Activated T-helper 1 cell treated with anti-CD3 and anti-CD28 coated beads, Interleukin-12 subunit alpha, Interleukin-12 subunit beta, Interleukin-2, Interleukin-4 antibody, amounts not matched to agents 30 ng/mL and 10 ng/mL and 1 ng/mL, durations not matched to agents 14 hours and 24 hours and 36 hours (primary cell): ENCODE measurements at regions of chr4 and their contacts with region 1.

Region 1: GRCh38 chr4:986879-987623 is at the start of gene IDUA:
- DNase-seq: peak; percentile 84
- H3K4me3 Mint-ChIP-seq: peak within 1 kb of the TSS; percentile 88
- H3K27ac Mint-ChIP-seq: peak within 1 kb of the TSS; percentile 81
- H3K4me1 Mint-ChIP-seq: peaks cover 17% of the 10 kb centered on the region
- H3K27me3 Mint-ChIP-seq: no peaks in the 10 kb centered on the region
- total RNA-seq, gene IDUA: 33.8 and 34.3 TPM in 2 replicates

Region 2: GRCh38 chr4:602559-602942 is 384.5 kb before region 1 on chr4:
- intact Hi-C with region 1: loop called (anchors 5 kb)
- DNase-seq: peak; percentile 23
- H3K4me3 Mint-ChIP-seq: no peak overlapping the region
- H3K27ac Mint-ChIP-seq: no peak overlapping the region
- H3K4me1 Mint-ChIP-seq: peaks cover 7% of the 10 kb centered on the region
- H3K27me3 Mint-ChIP-seq: peaks cover 3% of the 10 kb centered on the region

Region 3: GRCh38 chr4:742742-743311 is 244.2 kb before region 1 on chr4:
- intact Hi-C with region 1: loop called (anchors 2 kb)
- DNase-seq: peak; percentile 63
- H3K4me3 Mint-ChIP-seq: no peak overlapping the region
- H3K27ac Mint-ChIP-seq: no peak overlapping the region
- H3K4me1 Mint-ChIP-seq: no peaks in the 10 kb centered on the region
- H3K27me3 Mint-ChIP-seq: no peaks in the 10 kb centered on the region

Region 4: DNA sequence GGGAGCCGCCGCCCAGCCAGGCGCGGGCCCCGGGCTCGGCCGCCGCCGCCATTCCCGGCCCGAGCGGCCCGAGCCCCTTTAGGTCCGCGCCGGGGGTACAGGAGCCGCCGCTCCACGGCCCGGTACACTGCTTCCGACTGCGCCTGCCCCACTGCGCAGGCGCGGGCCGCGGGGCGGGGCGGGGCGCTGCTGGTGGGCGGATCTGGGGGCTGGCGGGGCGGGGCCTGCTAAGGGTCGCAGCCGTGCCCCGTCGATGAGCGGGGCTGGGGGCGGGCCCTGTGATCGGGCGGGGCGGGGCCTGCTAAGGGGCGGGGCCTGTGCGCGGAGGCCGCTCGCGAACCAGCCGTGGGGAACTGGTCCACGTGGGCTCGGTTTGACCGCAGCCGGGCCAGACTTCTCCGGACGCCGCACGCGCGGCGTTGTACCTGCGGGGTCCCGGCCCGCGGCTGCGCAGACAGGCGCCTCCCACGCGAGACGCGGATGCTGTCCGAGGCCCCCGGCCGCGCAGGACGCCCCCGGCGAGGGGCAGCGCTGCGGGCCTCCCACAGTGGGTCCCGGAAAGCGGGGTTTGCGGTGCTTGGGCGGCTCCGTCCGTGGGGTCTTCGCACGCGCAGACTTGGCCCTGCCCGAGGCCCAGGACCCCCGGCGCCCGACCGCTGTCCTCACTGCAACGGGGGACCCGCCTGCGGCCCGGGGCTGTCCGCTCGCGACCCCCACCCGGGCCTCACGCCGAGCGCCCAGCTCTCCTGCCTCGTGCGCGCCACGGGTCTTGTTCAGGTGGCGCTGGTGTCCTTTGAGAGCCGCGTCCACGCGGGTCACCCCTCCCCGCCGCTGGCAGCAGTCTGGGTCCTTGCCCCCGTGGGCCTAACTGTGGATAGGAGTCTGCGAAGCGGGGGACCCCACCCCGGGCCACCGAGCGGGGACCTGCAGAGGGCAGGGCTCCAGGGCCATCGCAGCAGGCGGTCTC is 13.3 kb before region 1 on chr4 and contains the start of gene DGKQ:
- intact Hi-C with region 1: loop called (anchors 1 kb)
- DNase-seq: peak; percentile 80
- H3K4me3 Mint-ChIP-seq: peak within 1 kb of the TSS; percentile 51
- H3K27ac Mint-ChIP-seq: no peak within 1 kb of the TSS
- H3K4me1 Mint-ChIP-seq: no peaks in the 10 kb centered on the region
- H3K27me3 Mint-ChIP-seq: no peaks in the 10 kb centered on the region
- total RNA-seq, gene DGKQ: 17.8 and 18.0 TPM in 2 replicates

Region 5: DNA sequence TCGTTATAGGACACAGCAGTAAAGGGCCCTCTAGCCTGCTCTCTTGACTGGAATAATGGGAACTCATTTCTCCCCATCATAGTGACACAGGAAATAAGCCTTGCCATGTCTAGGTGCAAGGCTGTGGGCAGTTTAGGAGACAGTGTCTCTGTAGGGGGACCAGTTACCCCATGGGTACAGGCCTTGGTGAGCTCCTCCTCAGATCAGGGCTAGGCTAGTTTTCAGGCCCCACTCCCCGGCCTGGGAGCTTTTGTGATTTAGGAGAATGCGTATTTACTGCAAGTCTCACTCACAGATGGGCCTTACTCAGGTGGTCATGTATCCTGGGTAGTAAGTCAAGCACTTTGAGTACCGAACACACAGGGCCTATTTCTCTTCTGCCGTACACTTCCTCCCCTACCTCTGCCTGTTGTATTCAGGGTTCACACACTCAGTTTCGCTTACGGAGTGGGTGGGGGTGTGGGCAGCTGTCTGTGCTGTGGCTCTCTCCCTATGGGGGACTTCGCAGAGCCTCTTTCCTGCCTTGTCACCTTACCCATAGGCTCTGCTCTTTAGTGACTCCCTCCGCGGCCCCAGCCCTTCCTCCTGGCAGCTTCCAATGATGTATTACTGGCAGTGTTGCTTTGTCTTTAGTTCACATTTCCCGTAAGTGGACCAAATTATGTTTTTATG is 1583.6 kb after region 1 on chr4:
- intact Hi-C with region 1: no loop called
- DNase-seq: peak; percentile 69
- H3K4me3 Mint-ChIP-seq: peak overlapping the region; percentile 12
- H3K27ac Mint-ChIP-seq: peak overlapping the region; percentile 80
- H3K4me1 Mint-ChIP-seq: peaks cover 42% of the 10 kb centered on the region
- H3K27me3 Mint-ChIP-seq: no peaks in the 10 kb centered on the region